Right ventricle myocardium inferior (tissue), 1 donor: ENCODE measurements at regions of chr2 and their contacts with region 1.

Region 1: GRCh38 chr2:203909261-203909967 is 27.1 kb upstream of the ICOS start:
- DNase-seq: no peak
- ATAC-seq: peak; percentile 83

Region 2: GRCh38 chr2:203650860-203651613 is 258.4 kb before region 1 on chr2:
- intact Hi-C with region 1: loop called (anchors 5 kb)
- DNase-seq: no peak
- ATAC-seq: peak; percentile 74